Right ventricle myocardium superior (tissue), 1 donor: ENCODE measurements at regions of chr1 and their contacts with region 1.

Region 1: DNA sequence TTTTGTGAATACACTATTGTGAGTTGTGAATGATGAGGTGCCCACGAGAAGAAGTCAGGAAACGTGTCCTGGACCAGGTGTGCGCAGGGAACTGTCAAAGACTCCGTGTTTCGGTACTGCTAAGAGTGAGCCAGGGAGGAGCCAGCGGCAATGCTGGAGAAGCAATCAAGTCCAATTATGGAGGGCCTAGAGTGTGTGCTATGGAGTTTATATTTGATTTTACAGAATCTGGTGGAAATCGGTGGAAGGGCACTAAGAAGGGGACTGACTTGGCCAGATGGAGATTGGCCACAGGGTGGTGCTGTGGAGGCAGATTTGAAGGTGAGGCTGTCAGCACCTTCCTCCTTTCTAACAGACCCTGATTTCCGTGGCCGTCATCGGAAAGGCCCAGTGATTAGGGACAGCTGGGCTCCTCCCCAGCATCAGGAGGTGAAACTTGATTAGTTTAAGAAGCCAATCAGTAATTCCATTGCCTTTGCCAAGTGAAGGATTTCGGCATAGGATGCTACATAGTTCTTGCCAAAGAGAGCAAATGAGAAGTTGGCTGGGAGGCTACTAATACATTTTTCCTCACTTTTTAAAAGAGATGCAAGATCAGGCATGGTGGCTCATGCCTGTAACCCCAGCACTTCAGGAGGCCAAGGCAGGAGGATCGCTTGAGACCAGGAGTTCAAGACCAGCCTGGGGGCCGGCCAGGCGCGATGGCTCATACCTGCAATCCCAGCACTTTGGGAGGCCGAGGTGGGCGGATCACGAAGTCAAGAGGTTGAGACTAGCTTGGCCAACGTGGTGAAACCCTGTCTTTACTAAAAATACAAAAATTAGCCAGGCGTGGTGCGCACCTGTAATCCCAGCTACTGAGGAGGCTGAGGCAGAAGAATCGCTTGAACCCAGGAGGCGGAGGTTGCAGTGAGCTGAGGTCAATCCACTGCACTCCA is 7.0 kb downstream of the PTCH2 start:
- DNase-seq: peak; percentile 88
- ATAC-seq: peak; percentile 89

Region 2: DNA sequence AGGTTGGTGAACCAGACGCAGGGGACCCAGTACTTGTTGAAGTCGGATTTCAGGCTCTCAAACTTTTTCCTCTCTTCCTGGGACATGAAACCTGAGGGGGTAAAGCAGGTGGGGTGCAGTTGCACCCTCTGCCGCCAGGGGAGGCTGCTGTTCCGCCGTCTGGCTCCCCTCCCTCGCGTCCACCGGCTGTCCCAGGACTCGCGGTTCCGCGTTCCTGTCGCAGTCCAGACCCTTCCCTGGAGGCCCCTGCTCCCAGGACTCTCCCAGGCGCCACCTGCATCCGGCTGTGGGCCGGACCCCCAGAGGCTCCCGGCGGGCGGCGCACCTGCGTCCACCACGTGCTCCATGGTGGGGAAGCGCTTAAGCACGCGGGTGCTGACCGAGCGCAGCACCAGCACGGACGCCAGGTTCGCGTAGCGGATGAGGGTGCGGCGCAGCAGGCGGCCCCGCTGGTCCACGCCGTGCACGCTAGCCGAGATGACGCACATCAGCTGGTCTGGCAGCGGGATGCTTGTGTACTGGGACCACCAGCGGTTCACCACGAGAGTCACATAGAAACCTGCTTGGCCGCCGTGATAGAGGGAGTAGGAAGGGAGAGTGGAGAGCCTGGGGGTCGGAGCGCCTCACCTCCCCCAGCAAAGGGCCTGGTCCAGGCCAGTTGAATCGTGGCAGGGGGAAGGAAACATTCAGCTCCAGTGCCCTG is 49.7 kb before region 1 on chr1:
- intact Hi-C with region 1: loop called (anchors 10 kb)
- DNase-seq: peak; percentile 79
- ATAC-seq: peak; percentile 80